ENCODE measurements at regions of chr10 and their contacts with region 1.

Region 1: GRCh38 chr10:86504510-86504909 is 17.1 kb downstream of the WAPL start:
- DNase-seq: no peak
- ATAC-seq: no peak
- H3K4me3 ChIP-seq: no peak overlapping the region
- H3K4me3 Mint-ChIP-seq: no peak overlapping the region
- H3K27ac ChIP-seq: no peak overlapping the region
- H3K27ac Mint-ChIP-seq: no peak overlapping the region
- H3K4me1 ChIP-seq: peaks cover 10 to 23% of the 10 kb centered on the region in 2 experiments
- H3K4me1 Mint-ChIP-seq: peaks cover 53 to 59% (median 57%) of the 10 kb centered on the region in 3 donors
- H3K27me3 ChIP-seq: no peaks in the 10 kb centered on the region
- H3K27me3 Mint-ChIP-seq: no peaks in the 10 kb centered on the region

Region 2: DNA sequence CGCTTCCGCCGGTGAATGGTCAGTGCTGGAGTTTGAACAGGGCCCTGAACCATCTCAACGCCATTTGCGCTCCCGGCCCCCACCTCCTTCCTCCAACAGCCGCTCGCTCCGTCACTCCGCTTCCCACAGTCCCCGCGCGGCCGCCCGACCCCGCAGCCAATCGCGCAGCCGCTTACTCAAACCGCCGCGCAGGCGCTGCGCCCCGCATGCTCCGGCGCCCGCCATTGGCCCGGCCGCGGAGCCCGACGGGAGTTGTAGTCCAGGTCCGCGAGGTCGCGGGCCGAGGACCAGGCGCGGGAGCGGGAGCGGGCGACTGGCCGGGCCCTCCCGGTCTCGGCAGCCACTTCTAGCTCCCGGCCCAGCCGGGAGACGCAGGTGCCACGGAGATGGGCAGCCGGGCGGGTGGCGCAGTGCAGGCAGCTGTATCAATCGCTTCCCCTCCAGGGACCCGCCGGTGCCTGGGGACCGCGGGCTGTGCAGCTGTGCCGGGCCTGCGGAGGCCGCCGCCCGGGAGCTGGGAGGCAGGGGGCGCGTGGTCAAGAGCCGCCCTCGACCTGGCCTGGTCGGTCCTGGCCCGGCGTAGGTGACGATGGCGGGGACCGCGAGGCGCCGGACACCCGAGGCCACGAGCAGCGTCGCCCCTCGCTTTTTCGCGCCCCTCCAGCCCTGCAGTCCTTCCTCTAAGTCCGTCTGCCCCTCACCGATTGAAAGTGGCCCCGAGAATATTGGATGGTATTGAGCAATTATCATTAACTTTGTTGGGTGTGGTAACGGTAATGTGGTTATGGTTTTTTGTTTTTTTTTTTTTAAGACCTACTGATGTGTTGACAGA is 17.4 kb after region 1 on chr10 and contains the start of gene WAPL:
- CTCF ChIA-PET with region 1: interaction called in 1 of 2 experiments, 3 read pairs
- POLR2A ChIA-PET with region 1: interaction called, 3 to 11 read pairs
- DNase-seq: peak; percentile 86 to 96 (median 92)
- ATAC-seq: peak; percentile 95 to 97 (median 96)
- H3K4me3 ChIP-seq: peak within 1 kb of the TSS; percentile 85 to 88
- H3K4me3 Mint-ChIP-seq: peak within 1 kb of the TSS; percentile 85 to 96 (median 93)
- H3K27ac ChIP-seq: peak within 1 kb of the TSS; percentile 58
- H3K27ac Mint-ChIP-seq: peak within 1 kb of the TSS; percentile 89 to 90
- H3K4me1 ChIP-seq: peaks cover 24 to 33% of the 10 kb centered on the region in 2 experiments
- H3K4me1 Mint-ChIP-seq: peaks cover 60 to 67% (median 67%) of the 10 kb centered on the region in 3 donors
- H3K27me3 ChIP-seq: no peaks in the 10 kb centered on the region
- H3K27me3 Mint-ChIP-seq: no peaks in the 10 kb centered on the region
- total RNA-seq, gene WAPL: 43.2 to 46.5 (median 44.8) TPM

Measured in T-cell (primary cell).